Right ventricle myocardium inferior (tissue), 1 donor: ENCODE measurements at regions of chr18 and their contacts with region 1.

Region 1: DNA sequence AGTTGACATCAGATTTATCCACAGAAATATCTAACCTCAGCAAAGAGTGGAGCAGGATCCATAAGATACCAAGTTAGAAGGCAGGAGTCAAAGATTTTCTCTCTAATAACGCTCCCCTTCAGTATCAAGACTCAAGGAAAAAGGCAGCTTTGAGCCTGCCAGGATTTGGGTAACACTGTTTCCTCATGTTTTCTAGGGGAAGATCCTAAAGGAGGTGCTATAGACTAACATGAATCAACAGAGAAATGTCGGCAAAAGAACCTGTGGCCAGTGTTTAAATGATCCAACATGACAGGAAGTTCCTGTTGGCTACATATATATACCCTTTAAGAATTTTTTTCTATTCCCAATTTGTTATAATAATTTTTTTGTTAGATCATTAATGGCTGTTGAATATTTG is 402.3 kb downstream of the TGIF1 start:
- DNase-seq: no peak
- ATAC-seq: no peak

Region 2: GRCh38 chr18:3458952-3459853 is 393.1 kb before region 1 on chr18:
- intact Hi-C with region 1: no loop called
- DNase-seq: no peak
- ATAC-seq: no peak

Region 3: GRCh38 chr18:3790703-3791102 is 61.6 kb before region 1 on chr18:
- intact Hi-C with region 1: no loop called
- DNase-seq: no peak
- ATAC-seq: no peak

Region 4: DNA sequence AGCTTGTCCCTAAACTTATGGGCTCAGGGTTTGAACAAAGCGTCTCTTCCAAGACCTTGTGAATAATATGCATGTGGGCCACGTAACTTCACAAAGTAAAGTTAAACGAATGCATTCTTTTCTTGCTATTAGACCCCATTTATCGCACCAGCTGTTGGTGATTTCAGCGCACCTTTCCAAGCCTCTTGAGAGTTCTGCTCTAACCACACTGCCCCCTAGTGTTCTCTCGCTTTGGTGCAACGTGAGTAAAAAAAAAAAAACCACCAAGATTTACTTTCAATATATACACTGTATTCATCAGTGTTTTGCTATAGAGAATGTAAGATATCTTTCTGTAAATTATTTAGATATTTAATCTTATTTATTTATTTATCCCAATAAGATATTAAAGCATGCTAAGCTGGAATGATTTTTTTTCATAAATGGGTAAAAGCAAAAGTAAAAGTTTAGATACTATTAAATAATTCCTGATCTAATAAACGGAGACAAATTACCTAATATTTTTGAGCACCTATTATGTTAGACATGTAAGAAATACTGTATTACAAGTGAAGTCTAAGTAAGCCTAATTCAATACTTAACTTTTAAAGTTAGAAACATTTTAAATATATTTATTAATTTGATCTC is 143.3 kb after region 1 on chr18:
- intact Hi-C with region 1: loop called (anchors 5 kb)
- DNase-seq: no peak
- ATAC-seq: peak; percentile 31